ENCODE measurements at regions of chr14 and their contacts with region 1.

Region 1: GRCh38 chr14:99936056-99936455 is 129.2 kb upstream of the EVL start:
- DNase-seq: no peak
- H3K4me3 Mint-ChIP-seq: no peak overlapping the region
- H3K27ac Mint-ChIP-seq: no peak overlapping the region
- H3K4me1 Mint-ChIP-seq: no peaks in the 10 kb centered on the region
- H3K27me3 Mint-ChIP-seq: no peaks in the 10 kb centered on the region

Region 2: GRCh38 chr14:99955826-99956455 is 19.9 kb after region 1 on chr14:
- CTCF ChIA-PET with region 1: no interaction called
- POLR2A ChIA-PET with region 1: no interaction called
- DNase-seq: no peak
- H3K4me3 Mint-ChIP-seq: no peak overlapping the region
- H3K27ac Mint-ChIP-seq: no peak overlapping the region
- H3K4me1 Mint-ChIP-seq: peaks cover 1% of the 10 kb centered on the region
- H3K27me3 Mint-ChIP-seq: peaks cover 19% of the 10 kb centered on the region

Region 3: DNA sequence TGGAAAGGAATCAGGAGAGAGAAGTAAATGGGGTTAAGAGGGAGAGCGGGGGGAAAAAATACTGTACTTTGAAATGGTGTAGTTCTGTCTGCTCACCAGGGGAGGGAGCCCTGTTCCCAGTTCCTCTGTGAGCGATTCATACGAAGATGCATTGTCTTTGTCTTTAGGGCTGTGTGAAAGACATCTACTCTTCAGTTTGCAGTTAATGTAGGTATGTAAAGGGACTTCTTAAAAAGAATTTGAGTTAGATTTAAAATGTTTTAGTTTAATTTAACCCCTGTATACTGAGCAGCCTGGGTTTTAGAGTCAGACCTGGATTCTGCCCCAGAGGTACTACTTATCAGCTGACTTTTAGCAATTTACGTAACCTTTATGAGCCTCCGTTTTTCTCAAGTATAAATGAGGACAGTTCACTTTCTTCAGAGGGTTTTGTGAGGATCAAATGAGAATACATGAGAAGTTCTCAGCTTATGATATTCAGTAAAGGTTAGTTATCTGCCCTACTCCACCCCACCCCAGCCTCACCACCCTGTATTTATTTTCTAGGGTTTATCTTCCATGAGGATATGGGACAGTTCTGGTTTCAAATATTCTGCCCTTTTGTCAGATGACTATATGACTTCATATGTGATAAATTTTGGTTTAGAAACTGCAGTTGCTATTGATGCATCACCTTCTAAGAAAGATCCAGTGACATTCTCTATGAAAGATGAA is 46.6 kb after region 1 on chr14:
- CTCF ChIA-PET with region 1: interaction called, 11 read pairs
- POLR2A ChIA-PET with region 1: no interaction called
- DNase-seq: peak; percentile 74
- H3K4me3 Mint-ChIP-seq: no peak overlapping the region
- H3K27ac Mint-ChIP-seq: no peak overlapping the region
- H3K4me1 Mint-ChIP-seq: peaks cover 20% of the 10 kb centered on the region
- H3K27me3 Mint-ChIP-seq: no peaks in the 10 kb centered on the region

Measured in activated CD4-positive, alpha-beta T cell treated with anti-CD3 and anti-CD28 coated beads, Interleukin-2, amount 10 ng/mL, durations not matched to agents 7 days and 5 days (primary cell).